Activated B cell treated with CpG ODN at 0.5 μM for 24 hours (primary cell): ENCODE measurements at regions of chr3 and their contacts with region 1.

Region 1: GRCh38 chr3:33803894-33804526 is 5.6 kb downstream of the PDCD6IP start:
- DNase-seq: no peak
- ATAC-seq: no peak
- H3K4me3 Mint-ChIP-seq: no peak overlapping the region
- H3K27ac Mint-ChIP-seq: peak overlapping the region; percentile 13
- H3K4me1 Mint-ChIP-seq: peaks cover 85% of the 10 kb centered on the region
- H3K27me3 Mint-ChIP-seq: no peaks in the 10 kb centered on the region
- CTCF ChIP-seq: no peak

Region 2: GRCh38 chr3:33821989-33822388 is 18.0 kb after region 1 on chr3:
- CTCF ChIA-PET with region 1: no interaction called
- POLR2A ChIA-PET with region 1: interaction called, 6 read pairs
- intact Hi-C with region 1: loop called (anchors 2 kb)
- DNase-seq: no peak
- ATAC-seq: no peak
- H3K4me3 Mint-ChIP-seq: no peak overlapping the region
- H3K27ac Mint-ChIP-seq: no peak overlapping the region
- H3K4me1 Mint-ChIP-seq: no peaks in the 10 kb centered on the region
- H3K27me3 Mint-ChIP-seq: no peaks in the 10 kb centered on the region
- CTCF ChIP-seq: no peak